MCF 10A (cell line): ENCODE measurements at regions of chr17 and their contacts with region 1.

Region 1: GRCh38 chr17:16285957-16286640 is 67.2 kb downstream of the CENPV start:
- DNase-seq: peak; percentile 96
- H3K4me3 Mint-ChIP-seq: peak overlapping the region; percentile 54
- H3K27ac Mint-ChIP-seq: peak overlapping the region; percentile 88
- H3K4me1 Mint-ChIP-seq: peaks cover 35% of the 10 kb centered on the region
- H3K27me3 Mint-ChIP-seq: no peaks in the 10 kb centered on the region
- CTCF ChIP-seq: no peak

Region 2: GRCh38 chr17:16232391-16232790 is 53.7 kb before region 1 on chr17:
- CTCF ChIA-PET with region 1: interaction called, 4 read pairs
- POLR2A ChIA-PET with region 1: interaction called, 4 read pairs
- intact Hi-C with region 1: loop called (anchors 1 kb)
- DNase-seq: no peak
- H3K4me3 Mint-ChIP-seq: no peak overlapping the region
- H3K27ac Mint-ChIP-seq: no peak overlapping the region
- H3K4me1 Mint-ChIP-seq: peaks cover 11% of the 10 kb centered on the region
- H3K27me3 Mint-ChIP-seq: no peaks in the 10 kb centered on the region
- CTCF ChIP-seq: no peak

Region 3: GRCh38 chr17:16243385-16243784 is 42.7 kb before region 1 on chr17:
- CTCF ChIA-PET with region 1: no interaction called
- POLR2A ChIA-PET with region 1: no interaction called
- intact Hi-C with region 1: no loop called
- DNase-seq: no peak
- H3K4me3 Mint-ChIP-seq: no peak overlapping the region
- H3K27ac Mint-ChIP-seq: no peak overlapping the region
- H3K4me1 Mint-ChIP-seq: no peaks in the 10 kb centered on the region
- H3K27me3 Mint-ChIP-seq: no peaks in the 10 kb centered on the region
- CTCF ChIP-seq: no peak

Region 4: DNA sequence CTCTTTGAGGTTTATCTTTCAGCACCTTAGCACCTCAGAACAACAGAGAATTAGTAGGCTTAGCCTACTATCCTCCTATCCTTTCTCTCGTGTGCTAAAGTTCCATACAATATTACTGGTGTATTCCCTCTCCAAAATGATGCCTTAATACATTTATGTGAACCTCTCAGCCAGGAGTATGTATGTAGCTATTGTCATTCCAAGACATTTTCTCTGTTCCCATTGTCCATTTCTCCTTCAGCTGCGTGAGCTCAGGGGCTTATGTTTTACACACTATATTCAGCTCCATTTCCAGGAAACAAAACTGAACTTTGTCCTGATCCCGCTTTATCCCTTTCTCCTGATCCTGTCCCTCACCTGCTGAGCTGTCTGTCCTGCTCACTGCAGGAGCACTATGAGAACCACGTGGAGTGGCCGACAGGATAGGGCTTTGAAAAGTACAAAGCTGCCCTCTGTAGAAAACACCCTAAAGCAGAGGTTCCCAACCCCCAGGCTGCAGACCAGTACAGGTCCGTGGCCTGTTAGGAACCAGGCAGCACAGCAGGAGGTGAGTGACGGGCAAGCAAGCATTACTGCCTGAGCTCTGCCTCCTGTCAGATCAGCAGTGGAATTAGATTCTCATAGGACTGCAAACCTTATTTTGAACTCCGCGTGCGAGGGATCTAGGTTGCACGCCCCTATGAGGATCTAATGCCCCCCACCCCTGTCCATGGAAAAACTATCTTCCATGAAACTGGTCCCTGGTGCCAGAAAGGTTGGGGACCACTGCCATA is 11.5 kb after region 1 on chr17:
- CTCF ChIA-PET with region 1: interaction called, 3 read pairs
- POLR2A ChIA-PET with region 1: interaction called, 12 read pairs
- intact Hi-C with region 1: no loop called
- DNase-seq: no peak
- H3K4me3 Mint-ChIP-seq: no peak overlapping the region
- H3K27ac Mint-ChIP-seq: no peak overlapping the region
- H3K4me1 Mint-ChIP-seq: no peaks in the 10 kb centered on the region
- H3K27me3 Mint-ChIP-seq: no peaks in the 10 kb centered on the region
- CTCF ChIP-seq: no peak

Region 5: GRCh38 chr17:16353317-16354174 is 67.4 kb after region 1 on chr17 and contains the start of gene CENPV:
- CTCF ChIA-PET with region 1: no interaction called
- POLR2A ChIA-PET with region 1: interaction called, 10 read pairs
- intact Hi-C with region 1: no loop called
- DNase-seq: peak; percentile 11
- H3K4me3 Mint-ChIP-seq: peak within 1 kb of the TSS; percentile 81
- H3K27ac Mint-ChIP-seq: peak within 1 kb of the TSS; percentile 43
- H3K4me1 Mint-ChIP-seq: peaks cover 4% of the 10 kb centered on the region
- H3K27me3 Mint-ChIP-seq: no peaks in the 10 kb centered on the region
- CTCF ChIP-seq: peak; percentile 9
- total RNA-seq, gene CENPV: 22.4 and 27.7 TPM in 2 replicates